Dendritic cell treated with granulocyte-macrophage colony-stimulating factor and Interleukin-4, amounts not matched to agents 40 ng/mL and 50 ng/mL, for 4 days (primary cell): ENCODE measurements at regions of chr12 and their contacts with region 1.

Region 1: DNA sequence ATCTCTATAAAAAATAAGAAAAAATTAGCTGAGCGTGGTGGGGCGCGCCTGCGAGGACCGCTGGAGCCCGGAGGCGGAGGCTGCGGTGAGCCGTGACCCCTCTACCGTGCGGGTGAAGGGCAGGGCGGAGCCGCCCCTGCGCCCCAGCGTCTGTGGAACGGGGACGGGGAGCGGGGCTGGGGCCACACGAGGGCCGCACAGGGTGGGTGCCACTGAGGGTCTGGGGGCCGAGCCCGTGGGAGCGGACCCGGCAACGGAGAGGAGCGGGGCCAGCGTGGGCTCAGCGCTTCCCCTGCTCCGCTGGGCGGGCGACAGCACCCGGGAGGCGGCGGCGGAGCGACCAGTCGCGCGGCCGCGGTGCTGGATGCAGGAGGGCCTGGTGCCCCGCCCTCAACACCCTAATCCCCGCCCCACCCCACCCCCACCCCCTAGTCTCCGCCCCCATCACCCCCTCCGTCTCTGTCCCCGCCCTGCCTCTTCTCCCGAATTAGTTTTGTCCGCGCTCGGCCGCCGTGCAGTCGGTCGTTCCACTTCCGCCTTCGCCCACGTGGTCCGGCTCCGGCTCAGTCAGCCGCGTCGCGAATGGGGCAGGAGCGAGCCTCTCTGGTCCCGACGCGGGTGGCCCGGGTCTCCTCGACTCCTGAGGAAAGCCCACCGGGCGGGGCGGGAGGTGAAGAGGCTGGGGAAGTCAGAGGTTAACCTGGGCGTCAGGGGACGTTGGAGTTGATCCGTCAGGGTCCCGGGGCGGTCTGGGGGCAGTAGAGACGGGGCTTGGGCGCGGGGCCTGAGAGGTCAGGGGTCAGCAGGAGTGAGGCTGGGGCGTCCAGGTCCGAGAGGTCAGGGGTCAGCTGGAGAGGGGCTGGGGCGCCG is at the start of gene PUS1:
- H3K4me3 Mint-ChIP-seq: peak within 1 kb of the TSS; percentile 98
- H3K27ac Mint-ChIP-seq: peak within 1 kb of the TSS; percentile 94
- H3K4me1 Mint-ChIP-seq: peaks cover 18% of the 10 kb centered on the region
- H3K27me3 Mint-ChIP-seq: peaks cover 9% of the 10 kb centered on the region

Region 2: GRCh38 chr12:131949431-131950181 is 20.7 kb after region 1 on chr12 and contains the start of gene EP400:
- intact Hi-C with region 1: loop called (anchors 1 kb)
- H3K4me3 Mint-ChIP-seq: peak within 1 kb of the TSS; percentile 90
- H3K27ac Mint-ChIP-seq: peak within 1 kb of the TSS; percentile 81
- H3K4me1 Mint-ChIP-seq: peaks cover 36% of the 10 kb centered on the region
- H3K27me3 Mint-ChIP-seq: no peaks in the 10 kb centered on the region

Region 3: DNA sequence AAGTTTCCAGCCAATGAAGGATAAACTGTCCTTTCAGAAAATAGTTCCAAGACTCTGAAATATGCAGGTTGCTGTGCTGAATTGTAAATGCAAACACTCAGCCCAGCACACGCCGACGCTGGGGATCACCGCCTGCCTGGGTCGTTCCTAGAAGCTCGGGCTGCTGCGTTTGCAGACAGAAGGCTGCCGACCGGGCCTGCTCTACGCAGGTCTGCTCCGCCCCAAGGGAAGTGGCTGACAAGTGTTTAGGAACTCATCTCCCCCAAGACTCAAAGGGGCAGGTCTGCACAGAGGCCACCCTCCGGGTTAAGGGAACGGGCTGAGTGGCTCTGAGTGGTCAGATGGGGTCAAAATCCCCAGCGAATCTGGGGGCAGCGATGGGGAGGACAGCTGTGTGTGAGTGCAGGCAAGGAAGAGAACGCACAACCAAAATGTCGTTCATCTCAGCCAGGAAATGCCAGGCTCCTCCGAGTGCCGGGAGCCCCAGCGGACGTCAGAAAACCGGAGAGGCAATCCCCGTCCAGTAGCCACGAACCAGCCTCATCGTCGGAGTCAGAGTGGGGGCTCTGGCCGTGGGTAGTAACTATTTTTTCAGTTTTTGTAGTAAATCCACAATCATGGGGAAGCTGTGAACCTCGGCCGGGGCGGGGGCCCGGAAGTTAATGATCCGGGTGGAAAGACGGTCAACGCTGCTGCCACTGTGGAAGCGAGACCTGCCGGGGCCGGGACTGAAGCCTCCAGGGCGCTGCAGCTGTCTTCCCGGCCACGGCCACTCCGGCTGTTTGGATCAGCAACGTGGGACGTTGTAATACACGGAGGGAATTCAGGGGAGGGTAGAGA is 394.4 kb after region 1 on chr12:
- intact Hi-C with region 1: no loop called
- H3K4me3 Mint-ChIP-seq: no peak overlapping the region
- H3K27ac Mint-ChIP-seq: no peak overlapping the region
- H3K4me1 Mint-ChIP-seq: peaks cover 8% of the 10 kb centered on the region
- H3K27me3 Mint-ChIP-seq: peaks cover 48% of the 10 kb centered on the region

Region 4: DNA sequence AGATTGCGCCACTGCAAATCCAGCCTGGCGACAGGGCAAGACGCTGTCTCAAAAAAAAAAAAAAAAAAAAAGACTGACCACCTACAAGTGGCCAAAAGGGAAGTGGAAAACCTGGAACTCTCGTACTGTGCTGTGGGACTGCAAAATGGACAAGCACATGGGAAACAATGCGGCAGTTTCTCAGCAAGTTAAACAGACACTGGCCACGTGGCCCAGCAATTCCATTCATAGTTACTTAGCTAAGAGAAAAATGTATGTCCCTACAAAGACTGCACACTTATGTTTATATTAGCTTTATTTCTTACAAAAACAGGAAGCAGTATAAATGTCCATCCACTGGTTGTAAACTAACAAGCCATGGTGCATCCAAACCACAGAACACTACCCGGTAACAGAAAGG is 952.9 kb after region 1 on chr12:
- intact Hi-C with region 1: no loop called
- H3K4me3 Mint-ChIP-seq: no peak overlapping the region
- H3K27ac Mint-ChIP-seq: no peak overlapping the region
- H3K4me1 Mint-ChIP-seq: peaks cover 27% of the 10 kb centered on the region
- H3K27me3 Mint-ChIP-seq: no peaks in the 10 kb centered on the region